ENCODE measurements at regions of chr11 and their contacts with region 1.

Region 1: GRCh38 chr11:62542750-62543567 is 3.6 kb downstream of the AHNAK start:
- DNase-seq: peak; percentile 73 to 90
- H3K4me3 ChIP-seq: peak overlapping the region; percentile 86 to 87
- H3K27ac ChIP-seq: peak overlapping the region; percentile 98
- H3K4me1 ChIP-seq: peaks cover 5 to 77% (median 61%) of the 10 kb centered on the region in 4 donors
- H3K27me3 ChIP-seq: no peaks in the 10 kb centered on the region
- CTCF ChIP-seq: peak; percentile 99

Region 2: GRCh38 chr11:62394825-62395538 is 148.0 kb before region 1 on chr11:
- intact Hi-C with region 1: loop called (anchors 5 kb)
- DNase-seq: peak; percentile 75 to 92
- H3K4me3 ChIP-seq: peak overlapping the region; percentile 36 to 44
- H3K27ac ChIP-seq: peak overlapping the region; percentile 63 to 77
- H3K4me1 ChIP-seq: peaks cover 8 to 39% (median 33%) of the 10 kb centered on the region in 4 donors
- H3K27me3 ChIP-seq: no peaks in the 10 kb centered on the region
- CTCF ChIP-seq: peak; percentile 62 to 76

Region 3: GRCh38 chr11:62427630-62428233 is 115.2 kb before region 1 on chr11:
- intact Hi-C with region 1: loop called (anchors 5 kb)
- DNase-seq: no peak
- H3K4me3 ChIP-seq: no peak overlapping the region
- H3K27ac ChIP-seq: no peak overlapping the region
- H3K4me1 ChIP-seq: peaks cover 0 to 16% (median 11%) of the 10 kb centered on the region in 4 donors
- H3K27me3 ChIP-seq: no peaks in the 10 kb centered on the region
- CTCF ChIP-seq: no peak

Region 4: DNA sequence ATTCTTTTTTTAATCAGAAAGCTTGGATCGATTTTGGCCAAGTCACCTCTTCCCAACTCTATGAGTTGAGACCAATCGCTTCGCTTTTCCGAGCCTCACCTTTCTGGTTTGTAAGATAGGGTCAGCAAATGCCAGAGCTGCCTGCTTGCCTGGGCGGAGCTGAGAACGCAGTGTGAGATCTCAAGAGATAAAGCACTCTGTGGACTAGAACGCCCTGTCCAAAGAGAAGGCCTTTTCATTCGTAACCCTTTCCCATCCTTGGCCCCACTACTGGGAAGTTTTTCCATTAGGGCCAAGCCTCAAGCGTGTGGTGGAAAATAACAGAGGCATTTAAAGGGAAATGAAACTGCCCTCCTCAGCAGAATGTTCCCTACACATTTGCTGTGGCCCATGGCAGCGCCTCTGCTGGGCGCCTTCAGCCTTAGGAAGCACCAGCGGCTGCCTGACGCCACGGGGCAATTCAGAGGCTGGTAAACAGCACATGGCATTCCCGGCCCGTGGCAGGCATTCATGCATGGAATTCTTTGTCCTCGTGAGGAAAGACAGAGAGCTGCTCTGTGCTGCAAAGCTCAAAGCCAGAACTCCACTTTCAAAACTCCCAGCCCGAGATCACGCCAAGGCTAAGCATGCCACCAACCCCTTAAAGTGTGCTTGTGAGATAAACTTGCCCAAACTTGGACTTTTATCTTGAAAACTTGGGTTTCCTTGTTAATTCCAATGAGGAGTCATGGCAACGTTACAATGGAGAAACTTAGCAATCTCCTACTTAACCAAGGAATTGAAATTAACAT is 34.5 kb before region 1 on chr11:
- intact Hi-C with region 1: loop called (anchors 5 kb)
- DNase-seq: peak; percentile 85 to 92
- H3K4me3 ChIP-seq: peak overlapping the region; percentile 34 to 40
- H3K27ac ChIP-seq: peak overlapping the region; percentile 71 to 78
- H3K4me1 ChIP-seq: peaks cover 0 to 59% (median 29%) of the 10 kb centered on the region in 4 donors
- H3K27me3 ChIP-seq: no peaks in the 10 kb centered on the region
- CTCF ChIP-seq: peak; percentile 49 to 65

Region 5: DNA sequence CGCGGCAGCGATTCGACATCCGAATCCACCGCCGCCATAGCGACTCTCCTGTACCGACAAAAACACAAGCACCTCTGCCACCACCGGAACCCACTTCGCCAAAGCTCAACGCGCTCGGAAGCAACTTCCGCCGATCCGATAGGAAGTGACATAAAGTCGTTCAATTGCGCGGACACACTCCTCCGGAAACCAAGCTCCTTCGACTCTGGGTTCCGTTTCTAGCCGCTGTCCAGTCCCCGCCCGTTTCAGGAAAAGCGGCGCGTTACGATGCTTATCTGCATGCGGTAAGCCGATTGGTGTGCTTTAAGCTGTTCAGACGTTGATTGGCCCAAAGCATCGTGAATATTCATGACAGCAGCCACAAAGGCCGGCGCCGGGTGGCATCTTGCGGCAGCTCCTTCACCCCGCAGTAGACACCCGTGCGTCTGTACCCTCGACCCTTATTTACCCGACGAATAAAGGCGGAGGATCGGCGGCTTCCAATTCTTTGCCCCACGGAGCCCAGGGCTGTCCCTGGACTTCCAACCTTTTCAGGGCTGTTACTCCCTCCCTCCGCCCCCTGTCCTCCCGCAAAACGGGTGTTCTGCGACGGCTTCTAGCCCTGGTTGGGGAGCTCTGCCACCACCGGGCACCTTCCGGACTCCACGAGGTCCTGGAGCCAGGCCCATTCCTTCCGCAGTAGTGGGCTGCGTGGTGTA is 48.6 kb after region 1 on chr11 and contains the start of gene TUT1:
- intact Hi-C with region 1: loop called (anchors 10 kb)
- DNase-seq: peak; percentile 98
- H3K4me3 ChIP-seq: peak within 1 kb of the TSS; percentile 69 to 89
- H3K27ac ChIP-seq: peak within 1 kb of the TSS; percentile 89 to 97
- H3K4me1 ChIP-seq: peaks cover 0 to 30% (median 19%) of the 10 kb centered on the region in 4 donors
- H3K27me3 ChIP-seq: no peaks in the 10 kb centered on the region
- CTCF ChIP-seq: no peak

Measured in tibial artery (tissue), 4 donors.